Ascending aorta (tissue), 2 donors: ENCODE measurements at regions of chr7 and their contacts with region 1.

Region 1: GRCh38 chr7:116576350-116577319 is 51.8 kb downstream of the CAV1 start:
- DNase-seq: peak; percentile 65 to 92
- H3K4me3 ChIP-seq: no peak overlapping the region
- H3K27ac ChIP-seq: peak overlapping the region; percentile 88 to 91
- H3K4me1 ChIP-seq: peaks cover 10 to 24% of the 10 kb centered on the region in 2 donors
- H3K27me3 ChIP-seq: no peaks in the 10 kb centered on the region
- CTCF ChIP-seq: peak in 1 of 3 experiments; percentile 10

Region 2: GRCh38 chr7:116461500-116461899 is 115.1 kb before region 1 on chr7:
- intact Hi-C with region 1: no loop called
- DNase-seq: no peak
- H3K4me3 ChIP-seq: no peak overlapping the region
- H3K27ac ChIP-seq: no peak overlapping the region
- H3K4me1 ChIP-seq: peaks cover 0 to 2% of the 10 kb centered on the region in 2 donors
- H3K27me3 ChIP-seq: no peaks in the 10 kb centered on the region
- CTCF ChIP-seq: no peak

Region 3: GRCh38 chr7:116560021-116560970 is 16.3 kb before region 1 on chr7:
- intact Hi-C with region 1: loop called (anchors 1 kb)
- DNase-seq: peak in 1 of 2 donors; percentile 74
- H3K4me3 ChIP-seq: no peak overlapping the region
- H3K27ac ChIP-seq: peak overlapping the region; percentile 80 to 92
- H3K4me1 ChIP-seq: peaks cover 15 to 43% of the 10 kb centered on the region in 2 donors
- H3K27me3 ChIP-seq: no peaks in the 10 kb centered on the region
- CTCF ChIP-seq: no peak